ENCODE measurements at regions of chr16 and their contacts with region 1.

Region 1: GRCh38 chr16:70428178-70428998 is 10.5 kb downstream of the ST3GAL2 start:
- DNase-seq: peak; percentile 82
- H3K4me3 Mint-ChIP-seq: no peak overlapping the region
- H3K27ac Mint-ChIP-seq: peak overlapping the region; percentile 62
- H3K4me1 Mint-ChIP-seq: peaks cover 60% of the 10 kb centered on the region
- H3K27me3 Mint-ChIP-seq: no peaks in the 10 kb centered on the region

Region 2: GRCh38 chr16:70251629-70252354 is 176.6 kb before region 1 on chr16 and contains the start of gene EXOSC6:
- CTCF ChIA-PET with region 1: no interaction called
- intact Hi-C with region 1: no loop called
- DNase-seq: peak; percentile 96
- H3K4me3 Mint-ChIP-seq: peak within 1 kb of the TSS; percentile 86
- H3K27ac Mint-ChIP-seq: peak within 1 kb of the TSS; percentile 93
- H3K4me1 Mint-ChIP-seq: peaks cover 24% of the 10 kb centered on the region
- H3K27me3 Mint-ChIP-seq: no peaks in the 10 kb centered on the region
- total RNA-seq, gene EXOSC6: 20.3 to 21.0 TPM

Region 3: GRCh38 chr16:70402916-70403659 is 25.3 kb before region 1 on chr16:
- CTCF ChIA-PET with region 1: interaction called, 4 read pairs
- intact Hi-C with region 1: loop called (anchors 1 kb)
- DNase-seq: no peak
- H3K4me3 Mint-ChIP-seq: no peak overlapping the region
- H3K27ac Mint-ChIP-seq: peak overlapping the region; percentile 25
- H3K4me1 Mint-ChIP-seq: peaks cover 46% of the 10 kb centered on the region
- H3K27me3 Mint-ChIP-seq: no peaks in the 10 kb centered on the region

Region 4: GRCh38 chr16:70416748-70417616 is 11.4 kb before region 1 on chr16:
- CTCF ChIA-PET with region 1: no interaction called
- intact Hi-C with region 1: loop called (anchors 1 kb)
- DNase-seq: no peak
- H3K4me3 Mint-ChIP-seq: no peak overlapping the region
- H3K27ac Mint-ChIP-seq: no peak overlapping the region
- H3K4me1 Mint-ChIP-seq: peaks cover 33% of the 10 kb centered on the region
- H3K27me3 Mint-ChIP-seq: no peaks in the 10 kb centered on the region

Region 5: GRCh38 chr16:70477354-70477753 is 49.0 kb after region 1 on chr16:
- CTCF ChIA-PET with region 1: no interaction called
- intact Hi-C with region 1: loop called (anchors 2 kb)
- DNase-seq: no peak
- H3K4me3 Mint-ChIP-seq: no peak overlapping the region
- H3K27ac Mint-ChIP-seq: peak overlapping the region; percentile 90
- H3K4me1 Mint-ChIP-seq: peaks cover 20% of the 10 kb centered on the region
- H3K27me3 Mint-ChIP-seq: no peaks in the 10 kb centered on the region

Region 6: DNA sequence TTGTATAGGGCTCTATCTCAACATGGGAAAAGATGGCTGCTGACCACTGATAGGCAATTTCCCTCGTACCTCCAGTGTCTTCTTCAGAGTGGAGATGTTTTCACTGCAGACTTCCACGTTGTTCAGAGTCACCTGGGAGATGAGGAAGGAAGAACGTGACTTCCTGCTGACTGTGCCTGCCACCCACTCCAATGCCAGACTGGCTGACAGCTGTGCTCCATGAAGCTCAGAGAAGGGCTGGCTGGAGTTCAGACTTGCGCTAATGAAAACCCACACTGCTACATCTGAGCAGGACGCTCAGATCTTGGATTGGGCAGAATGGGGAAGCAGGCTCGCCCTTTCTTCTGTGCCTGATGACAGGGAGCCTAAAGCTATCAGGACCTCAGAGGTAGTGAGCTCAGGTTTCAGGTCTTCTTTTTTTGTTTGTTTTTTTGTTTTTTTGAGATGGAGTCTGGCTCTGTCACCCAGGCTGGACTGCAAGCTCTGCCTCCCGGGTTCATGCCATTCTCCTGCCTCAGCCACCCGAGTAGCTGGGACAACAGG is 61.9 kb after region 1 on chr16:
- CTCF ChIA-PET with region 1: no interaction called
- intact Hi-C with region 1: no loop called
- DNase-seq: no peak
- H3K4me3 Mint-ChIP-seq: no peak overlapping the region
- H3K27ac Mint-ChIP-seq: no peak overlapping the region
- H3K4me1 Mint-ChIP-seq: peaks cover 8% of the 10 kb centered on the region
- H3K27me3 Mint-ChIP-seq: no peaks in the 10 kb centered on the region